ENCODE measurements at regions of chr5 and their contacts with region 1.

Region 1: GRCh38 chr5:122515709-122516431 is 203.8 kb downstream of the SNCAIP start:
- DNase-seq: peak; percentile 65
- H3K4me3 Mint-ChIP-seq: peak overlapping the region; percentile 79
- H3K27ac Mint-ChIP-seq: no peak overlapping the region
- H3K4me1 Mint-ChIP-seq: no peaks in the 10 kb centered on the region
- H3K27me3 Mint-ChIP-seq: peaks cover 29% of the 10 kb centered on the region
- CTCF ChIP-seq: peak; percentile 67

Region 2: GRCh38 chr5:122219436-122220166 is 296.3 kb before region 1 on chr5:
- CTCF ChIA-PET with region 1: no interaction called
- intact Hi-C with region 1: no loop called
- DNase-seq: no peak
- H3K4me3 Mint-ChIP-seq: no peak overlapping the region
- H3K27ac Mint-ChIP-seq: no peak overlapping the region
- H3K4me1 Mint-ChIP-seq: no peaks in the 10 kb centered on the region
- H3K27me3 Mint-ChIP-seq: no peaks in the 10 kb centered on the region
- CTCF ChIP-seq: no peak

Region 3: DNA sequence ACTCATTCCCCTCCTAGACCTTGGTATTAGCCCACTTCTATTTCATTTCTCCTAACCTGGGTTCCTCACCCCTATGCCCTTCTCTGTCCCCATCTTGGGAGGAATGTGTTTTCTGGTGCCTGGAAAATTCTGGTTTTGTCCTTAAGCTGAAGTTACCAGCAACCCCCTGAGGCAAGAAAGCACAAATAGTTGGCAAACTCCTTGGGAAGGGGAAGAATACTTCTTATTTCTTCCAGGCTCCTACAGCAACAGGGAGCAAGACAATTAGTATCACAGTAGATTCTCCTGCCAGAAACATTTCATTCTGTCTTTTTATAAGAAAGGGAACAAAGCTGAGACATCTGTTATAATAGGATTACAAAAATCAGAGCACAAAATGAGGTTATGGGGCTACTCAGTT is 61.3 kb before region 1 on chr5:
- CTCF ChIA-PET with region 1: no interaction called
- intact Hi-C with region 1: no loop called
- DNase-seq: no peak
- H3K4me3 Mint-ChIP-seq: no peak overlapping the region
- H3K27ac Mint-ChIP-seq: no peak overlapping the region
- H3K4me1 Mint-ChIP-seq: peaks cover 9% of the 10 kb centered on the region
- H3K27me3 Mint-ChIP-seq: peaks cover 9% of the 10 kb centered on the region
- CTCF ChIP-seq: no peak

Region 4: GRCh38 chr5:122656160-122656559 is 140.3 kb after region 1 on chr5:
- CTCF ChIA-PET with region 1: no interaction called
- intact Hi-C with region 1: loop called (anchors 5 kb)
- DNase-seq: no peak
- H3K4me3 Mint-ChIP-seq: no peak overlapping the region
- H3K27ac Mint-ChIP-seq: peak overlapping the region; percentile 47
- H3K4me1 Mint-ChIP-seq: peaks cover 37% of the 10 kb centered on the region
- H3K27me3 Mint-ChIP-seq: no peaks in the 10 kb centered on the region
- CTCF ChIP-seq: no peak

Region 5: GRCh38 chr5:122882837-122883236 is 367.0 kb after region 1 on chr5:
- CTCF ChIA-PET with region 1: no interaction called
- intact Hi-C with region 1: no loop called
- DNase-seq: no peak
- H3K4me3 Mint-ChIP-seq: no peak overlapping the region
- H3K27ac Mint-ChIP-seq: no peak overlapping the region
- H3K4me1 Mint-ChIP-seq: no peaks in the 10 kb centered on the region
- H3K27me3 Mint-ChIP-seq: no peaks in the 10 kb centered on the region
- CTCF ChIP-seq: no peak

Region 6: GRCh38 chr5:122896598-122897282 is 380.9 kb after region 1 on chr5:
- CTCF ChIA-PET with region 1: no interaction called
- intact Hi-C with region 1: loop called (anchors 5 kb)
- DNase-seq: no peak
- H3K4me3 Mint-ChIP-seq: no peak overlapping the region
- H3K27ac Mint-ChIP-seq: no peak overlapping the region
- H3K4me1 Mint-ChIP-seq: peaks cover 4% of the 10 kb centered on the region
- H3K27me3 Mint-ChIP-seq: no peaks in the 10 kb centered on the region
- CTCF ChIP-seq: peak; percentile 46

Region 7: DNA sequence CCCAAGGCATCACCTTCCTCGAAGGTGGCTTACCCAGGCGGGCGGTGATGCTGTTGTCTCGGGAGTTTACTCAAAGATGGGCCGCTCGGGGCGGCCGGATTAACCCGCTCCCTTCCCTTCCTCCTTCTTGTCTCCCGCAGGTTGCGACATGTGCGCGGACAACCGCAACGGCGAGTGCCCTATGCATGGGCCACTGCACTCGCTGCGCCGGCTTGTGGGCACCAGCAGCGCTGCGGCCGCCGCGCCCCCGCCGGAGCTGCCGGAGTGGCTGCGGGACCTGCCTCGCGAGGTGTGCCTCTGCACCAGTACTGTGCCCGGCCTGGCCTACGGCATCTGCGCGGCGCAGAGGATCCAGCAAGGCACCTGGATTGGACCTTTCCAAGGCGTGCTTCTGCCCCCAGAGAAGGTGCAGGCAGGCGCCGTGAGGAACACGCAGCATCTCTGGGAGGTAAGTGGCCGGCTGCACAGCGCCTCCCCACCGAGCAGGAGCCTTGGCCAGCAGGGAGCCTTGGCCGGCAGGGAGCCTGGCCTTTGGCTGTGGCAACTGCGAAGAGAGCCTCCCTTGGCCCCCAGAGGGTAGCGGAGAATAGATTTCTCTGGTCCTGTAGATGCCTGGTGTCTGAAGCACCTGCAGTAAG is 583.8 kb after region 1 on chr5:
- CTCF ChIA-PET with region 1: no interaction called
- intact Hi-C with region 1: loop called (anchors 5 kb)
- DNase-seq: peak; percentile 82
- H3K4me3 Mint-ChIP-seq: peak overlapping the region; percentile 67
- H3K27ac Mint-ChIP-seq: no peak overlapping the region
- H3K4me1 Mint-ChIP-seq: peaks cover 16% of the 10 kb centered on the region
- H3K27me3 Mint-ChIP-seq: peaks cover 19% of the 10 kb centered on the region
- CTCF ChIP-seq: peak; percentile 14

Region 8: DNA sequence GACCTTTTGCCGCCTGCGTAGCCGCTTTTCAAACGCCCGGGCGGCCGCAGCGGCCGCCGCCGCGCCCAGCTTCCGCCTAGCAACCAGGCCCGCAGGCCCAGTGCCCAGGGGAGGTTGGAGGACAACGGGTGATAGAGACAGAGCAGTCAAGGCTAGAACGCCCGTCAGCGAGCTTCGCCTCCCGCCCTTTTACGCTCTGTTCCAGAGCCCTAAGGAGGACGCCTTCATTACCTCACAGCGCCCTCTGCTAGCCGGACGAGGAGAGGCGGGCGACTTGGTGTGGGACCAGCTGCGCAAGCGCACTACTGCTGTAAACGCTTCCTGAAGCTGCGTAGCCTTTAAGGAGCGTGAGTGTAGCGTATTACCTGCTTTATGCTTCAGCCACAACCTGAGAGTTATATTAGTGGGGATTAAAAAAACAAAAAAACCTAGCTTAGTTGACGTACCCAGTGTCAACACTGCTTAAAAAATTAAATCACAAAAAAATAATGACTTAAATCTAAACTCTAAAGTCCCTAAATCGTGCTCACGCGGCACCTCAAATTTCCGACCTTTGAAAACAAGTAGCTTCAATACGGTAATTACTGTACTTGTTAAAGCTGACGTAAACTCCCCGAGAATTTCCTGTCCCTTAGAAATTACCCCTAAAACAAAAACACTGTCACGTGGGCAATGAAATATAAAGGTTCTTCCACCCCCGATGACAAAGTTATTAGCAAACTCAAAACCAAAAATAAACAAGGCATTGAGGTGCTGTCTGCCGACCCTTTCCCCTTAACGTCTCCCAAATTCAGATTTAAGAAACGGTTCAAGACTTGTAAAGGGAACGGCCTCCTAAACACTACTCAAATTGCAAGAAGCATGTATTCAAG is 907.6 kb after region 1 on chr5 and contains the start of gene CEP120:
- CTCF ChIA-PET with region 1: interaction called, 4 read pairs
- intact Hi-C with region 1: loop called (anchors 5 kb)
- DNase-seq: peak; percentile 98
- H3K4me3 Mint-ChIP-seq: no peak within 1 kb of the TSS
- H3K27ac Mint-ChIP-seq: no peak within 1 kb of the TSS
- H3K4me1 Mint-ChIP-seq: peaks cover 22% of the 10 kb centered on the region
- H3K27me3 Mint-ChIP-seq: no peaks in the 10 kb centered on the region
- CTCF ChIP-seq: peak; percentile 80
- total RNA-seq, gene CEP120: 25.0 and 27.1 TPM in 2 replicates